ENCODE measurements at regions of chr17 and their contacts with region 1.

Region 1: GRCh38 chr17:4966844-4967538 is 626 bp downstream of the SPAG7 start:
- DNase-seq: peak; percentile 94
- H3K4me3 ChIP-seq: peak overlapping the region; percentile 59 to 72
- H3K27ac ChIP-seq: peak overlapping the region; percentile 93 to 96
- H3K4me1 ChIP-seq: peaks cover 16 to 24% of the 10 kb centered on the region in 2 experiments; a peak in 3 of 4 replicates
- H3K27me3 ChIP-seq: no peaks in the 10 kb centered on the region
- CTCF ChIP-seq: no peak
- EP300 ChIP-seq: no peak
- RAD21 ChIP-seq: no peak

Region 2: DNA sequence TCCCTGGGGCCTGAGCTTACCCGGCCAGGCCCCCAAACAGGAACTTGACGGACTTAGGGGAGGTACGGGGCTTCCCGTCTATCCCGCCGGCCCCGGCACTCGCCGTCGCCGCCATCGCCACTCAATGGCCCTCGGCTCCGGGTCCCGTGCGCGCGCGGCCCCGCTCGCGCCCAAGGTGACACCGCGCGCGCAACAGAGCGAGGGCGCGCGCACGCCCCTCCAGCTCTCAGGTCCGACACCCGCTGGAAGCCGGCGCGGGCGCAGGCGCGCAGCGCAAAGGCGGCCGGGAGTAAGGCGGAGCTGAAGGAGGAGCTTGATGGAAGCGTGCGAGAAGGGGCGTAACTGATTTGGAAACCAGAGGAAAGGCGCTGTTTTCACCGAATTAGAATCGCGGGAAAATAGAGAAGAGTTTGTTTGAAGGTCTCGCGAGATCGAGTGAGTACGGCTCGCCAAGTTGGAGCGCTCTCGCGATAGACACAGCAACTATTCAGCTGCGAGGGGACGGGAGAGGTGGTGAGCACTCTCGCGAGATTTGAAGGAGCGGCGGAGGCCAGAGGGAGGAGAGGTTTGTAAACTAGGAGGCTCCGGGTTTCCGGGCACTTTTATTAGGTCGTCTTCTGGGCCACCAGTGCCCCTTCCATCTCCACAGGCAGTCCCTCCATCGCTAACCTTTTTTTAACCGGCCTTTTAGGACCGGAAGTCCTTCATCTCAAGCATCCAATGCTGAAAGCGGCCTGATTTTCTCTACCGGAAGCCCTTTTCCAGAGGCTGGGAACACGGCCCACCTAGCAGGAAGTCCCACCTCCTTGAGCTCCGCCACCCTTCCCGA is 27.0 kb before region 1 on chr17 and contains the starts of genes RNF167 and SLC25A11:
- CTCF ChIA-PET with region 1: interaction called, 3 read pairs
- POLR2A ChIA-PET with region 1: interaction called, 35 read pairs
- DNase-seq: peak; percentile 98
- H3K4me3 ChIP-seq: peak within 1 kb of the TSS; percentile 80 to 86
- H3K27ac ChIP-seq: peak within 1 kb of the TSS; percentile 94 to 98
- H3K4me1 ChIP-seq: peaks cover 16 to 27% of the 10 kb centered on the region in 2 experiments; a peak in 3 of 4 replicates
- H3K27me3 ChIP-seq: no peaks in the 10 kb centered on the region
- CTCF ChIP-seq: no peak
- EP300 ChIP-seq: no peak
- RAD21 ChIP-seq: no peak
- polyA plus RNA-seq, gene RNF167: 96.5 and 115 TPM in 2 replicates
- polyA plus RNA-seq, gene SLC25A11: 58.5 and 82.8 TPM in 2 replicates

Region 3: GRCh38 chr17:4948931-4949320 is 18.1 kb before region 1 on chr17:
- CTCF ChIA-PET with region 1: interaction called, 13 read pairs
- POLR2A ChIA-PET with region 1: interaction called, 56 read pairs
- DNase-seq: peak; percentile 95
- H3K4me3 ChIP-seq: peak overlapping the region; percentile 79 to 99
- H3K27ac ChIP-seq: peak overlapping the region; percentile 97 to 100
- H3K4me1 ChIP-seq: peaks cover 36 to 46% of the 10 kb centered on the region in 2 experiments
- H3K27me3 ChIP-seq: no peaks in the 10 kb centered on the region
- CTCF ChIP-seq: no peak
- EP300 ChIP-seq: no peak
- RAD21 ChIP-seq: no peak

Region 4: DNA sequence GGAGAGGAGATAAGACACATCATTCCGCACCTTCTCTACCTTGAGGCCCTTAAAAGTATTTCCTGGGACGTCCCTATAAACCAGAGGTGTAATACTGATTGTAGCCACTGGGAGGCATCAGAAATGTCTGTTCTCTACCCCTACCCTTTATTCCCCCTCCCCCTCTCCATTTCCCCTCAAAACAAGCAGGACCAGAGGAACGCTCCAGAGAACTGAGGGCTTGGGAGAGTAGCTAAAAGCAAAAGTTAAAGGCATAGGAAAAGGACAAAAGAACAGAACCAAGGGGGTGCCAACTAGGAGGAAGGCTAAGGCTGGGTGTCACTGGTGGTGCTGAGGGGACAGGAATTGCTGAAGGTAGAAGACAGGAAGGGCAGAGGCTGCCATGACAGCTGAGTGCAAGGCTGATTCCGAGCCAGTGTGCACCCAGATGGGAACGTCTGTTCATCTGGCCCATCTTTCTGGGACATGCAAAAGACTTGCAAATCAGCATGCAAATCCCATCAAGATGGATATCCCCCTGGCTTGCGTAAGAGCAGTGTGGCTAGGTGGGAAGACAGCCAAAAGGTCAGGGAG is 13.7 kb after region 1 on chr17:
- CTCF ChIA-PET with region 1: interaction called, 52 read pairs
- POLR2A ChIA-PET with region 1: interaction called, 3 read pairs
- DNase-seq: peak; percentile 84
- H3K4me3 ChIP-seq: no peak overlapping the region
- H3K27ac ChIP-seq: no peak overlapping the region
- H3K4me1 ChIP-seq: peaks cover 0 to 2% of the 10 kb centered on the region in 2 experiments; a peak in 1 of 4 replicates
- H3K27me3 ChIP-seq: no peaks in the 10 kb centered on the region
- CTCF ChIP-seq: peak; percentile 73
- EP300 ChIP-seq: no peak
- RAD21 ChIP-seq: peak; percentile 69

Region 5: DNA sequence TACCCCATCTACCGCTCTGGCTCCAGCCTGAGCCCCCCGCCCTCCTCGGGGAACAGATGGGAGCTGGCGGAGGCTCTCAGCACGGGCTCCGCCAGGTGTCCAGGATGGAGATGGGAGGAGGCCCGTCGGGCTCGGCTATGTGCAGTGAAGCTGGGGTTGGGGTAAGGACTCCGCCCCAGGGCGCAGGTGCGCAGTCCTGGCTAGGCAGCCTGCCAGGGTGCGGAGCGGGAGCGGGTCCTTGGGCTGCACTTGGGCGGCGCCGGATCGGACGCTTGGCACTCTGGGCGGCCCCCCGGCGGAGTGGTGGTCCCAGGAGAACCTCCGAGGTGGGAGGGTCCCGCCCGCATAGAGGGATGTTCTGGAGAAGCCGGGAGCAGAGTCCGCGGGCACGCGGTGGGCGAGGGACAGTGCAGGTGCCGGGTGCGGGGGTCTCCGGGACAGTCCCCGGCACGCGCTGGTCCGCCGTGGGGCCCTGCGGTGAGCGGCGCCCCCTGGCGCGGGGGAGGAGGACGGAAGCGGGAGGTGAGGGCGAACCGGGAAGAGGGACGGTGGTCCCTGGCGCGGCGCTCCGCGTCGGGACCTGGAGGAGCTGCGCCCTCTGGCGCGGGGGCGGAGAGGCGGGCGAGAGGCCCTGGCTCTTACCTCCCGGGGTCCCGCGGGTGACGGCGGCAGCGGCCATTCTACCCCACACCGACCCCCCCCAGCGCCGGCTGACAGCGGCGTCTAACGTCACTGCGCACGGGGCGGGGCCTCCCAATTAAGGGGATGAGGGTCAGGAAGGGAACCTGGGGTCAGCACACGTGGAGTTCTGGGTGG is 20.2 kb after region 1 on chr17 and contains the start of gene CAMTA2:
- CTCF ChIA-PET with region 1: interaction called, 39 read pairs
- POLR2A ChIA-PET with region 1: interaction called, 5 read pairs
- DNase-seq: peak; percentile 94
- H3K4me3 ChIP-seq: peak within 1 kb of the TSS; percentile 83 to 96
- H3K27ac ChIP-seq: peak within 1 kb of the TSS; percentile 41 to 74; a peak in 2 of 4 replicates
- H3K4me1 ChIP-seq: peaks cover 7 to 18% of the 10 kb centered on the region in 2 experiments; a peak in 2 of 4 replicates
- H3K27me3 ChIP-seq: no peaks in the 10 kb centered on the region
- CTCF ChIP-seq: peak; percentile 80
- EP300 ChIP-seq: no peak
- RAD21 ChIP-seq: peak; percentile 30
- polyA plus RNA-seq, gene CAMTA2: 18.4 and 27.0 TPM in 2 replicates

Region 6: DNA sequence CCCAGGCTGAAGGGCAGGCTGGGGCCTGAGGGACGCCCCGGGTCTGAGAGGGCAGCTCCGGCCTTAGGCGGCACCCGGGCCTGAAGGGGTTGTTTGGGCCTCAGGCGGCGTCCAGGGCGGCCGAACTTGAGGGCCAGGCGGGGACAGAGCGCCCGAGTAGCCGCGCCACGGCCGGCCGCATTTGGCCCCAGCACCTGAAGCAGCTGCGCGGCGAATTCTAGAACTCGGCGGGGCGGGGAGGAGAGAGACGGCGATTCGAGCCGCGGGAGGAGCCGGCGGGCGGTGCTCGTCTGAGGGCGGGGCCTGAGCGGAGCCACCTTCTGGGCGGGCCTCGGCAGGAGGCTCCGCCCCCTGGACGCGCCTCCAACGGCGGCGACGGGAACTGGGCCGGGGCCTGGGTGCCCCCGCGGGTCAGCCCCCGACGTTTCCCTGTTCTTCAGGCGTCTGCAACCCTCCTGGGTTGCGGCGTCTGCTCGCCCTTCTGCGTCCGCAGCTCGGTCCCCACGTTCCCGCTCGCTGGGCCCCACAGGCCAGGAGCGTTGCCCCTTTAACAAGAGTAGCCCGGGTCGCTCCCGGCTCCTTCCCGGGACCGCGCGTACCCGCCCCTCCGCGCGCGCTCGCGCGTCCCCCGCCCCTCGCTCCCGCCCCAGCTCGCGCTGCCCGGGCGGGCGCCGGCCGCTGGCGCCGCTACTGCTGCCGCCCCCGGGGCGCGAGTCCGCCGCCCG is 30.5 kb after region 1 on chr17 and contains the starts of genes INCA1 and KIF1C:
- CTCF ChIA-PET with region 1: interaction called, 3 read pairs
- POLR2A ChIA-PET with region 1: interaction called, 13 read pairs
- DNase-seq: peak; percentile 99
- H3K4me3 ChIP-seq: peak within 1 kb of the TSS; percentile 93 to 99
- H3K27ac ChIP-seq: peak within 1 kb of the TSS; percentile 66 to 85; a peak in 3 of 4 replicates
- H3K4me1 ChIP-seq: peaks cover 10 to 24% of the 10 kb centered on the region in 2 experiments; a peak in 3 of 4 replicates
- H3K27me3 ChIP-seq: no peaks in the 10 kb centered on the region
- CTCF ChIP-seq: no peak
- EP300 ChIP-seq: no peak
- RAD21 ChIP-seq: no peak
- polyA plus RNA-seq, gene INCA1: 1.2 and 1.3 TPM in 2 replicates
- polyA plus RNA-seq, gene KIF1C: 36.7 and 58.2 TPM in 2 replicates

Measured in SK-N-SH (cell line).